ENCODE measurements at regions of chrX and their contacts with region 1.

Region 1: GRCh38 chrX:12946838-12947544 is 27.9 kb upstream of the TMSB4X start:
- DNase-seq: peak; percentile 82
- ATAC-seq: peak; percentile 89
- H3K4me3 ChIP-seq: no peak overlapping the region
- H3K27ac ChIP-seq: peak overlapping the region; percentile 53; the same call in 1 of the 2 replicates
- H3K4me1 ChIP-seq: peaks cover 14% of the 10 kb centered on the region
- H3K27me3 ChIP-seq: no peaks in the 10 kb centered on the region
- CTCF ChIP-seq: peak; percentile 100
- POLR2A ChIP-seq: no peak
- RAD21 ChIP-seq: peak; percentile 90

Region 2: DNA sequence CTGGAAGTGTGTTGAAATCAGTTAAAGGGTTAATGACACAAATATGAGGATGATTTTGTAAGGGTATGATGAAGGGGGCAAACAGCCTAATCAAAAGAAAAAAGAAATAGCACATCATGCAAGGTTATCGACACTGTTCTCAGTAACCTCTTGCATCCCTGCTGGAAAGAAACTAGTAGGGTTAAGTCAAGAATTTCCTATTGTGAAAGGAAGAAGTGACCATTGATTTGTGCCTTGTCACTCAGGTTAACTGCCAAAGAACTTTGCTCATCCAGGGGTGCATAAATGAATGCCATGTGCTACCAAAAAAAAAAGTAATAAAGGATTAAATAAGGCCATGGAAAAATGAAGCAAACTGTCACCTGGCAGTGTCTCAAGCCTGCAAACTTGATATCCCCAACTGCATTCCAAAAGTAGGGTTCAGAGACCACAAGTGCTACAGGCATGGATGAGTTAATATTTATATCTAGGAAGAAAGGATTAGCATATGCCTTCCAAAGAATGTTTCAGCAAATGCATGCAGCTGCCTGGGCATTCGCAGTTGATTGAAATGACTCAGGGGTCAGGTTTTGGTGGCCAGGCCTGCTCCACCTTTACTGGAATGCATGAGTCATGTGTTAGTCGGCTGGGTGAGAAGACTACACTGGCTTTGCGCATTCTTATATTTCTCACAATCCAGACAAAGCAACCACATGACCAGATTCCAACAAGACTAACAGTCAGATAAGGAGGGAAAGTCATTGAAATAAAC is 451.3 kb after region 1 on chrX:
- CTCF ChIA-PET with region 1: no interaction called
- POLR2A ChIA-PET with region 1: no interaction called
- dilution Hi-C with region 1: no loop called
- in situ Hi-C with region 1: no loop called
- intact Hi-C with region 1: loop called (anchors 2 kb)
- DNase-seq: peak; percentile 100
- ATAC-seq: peak; percentile 94
- H3K4me3 ChIP-seq: no peak overlapping the region
- H3K27ac ChIP-seq: peak overlapping the region; percentile 41
- H3K4me1 ChIP-seq: peaks cover 4% of the 10 kb centered on the region
- H3K27me3 ChIP-seq: no peaks in the 10 kb centered on the region
- CTCF ChIP-seq: no peak
- POLR2A ChIP-seq: no peak
- RAD21 ChIP-seq: peak; percentile 35

Region 3: DNA sequence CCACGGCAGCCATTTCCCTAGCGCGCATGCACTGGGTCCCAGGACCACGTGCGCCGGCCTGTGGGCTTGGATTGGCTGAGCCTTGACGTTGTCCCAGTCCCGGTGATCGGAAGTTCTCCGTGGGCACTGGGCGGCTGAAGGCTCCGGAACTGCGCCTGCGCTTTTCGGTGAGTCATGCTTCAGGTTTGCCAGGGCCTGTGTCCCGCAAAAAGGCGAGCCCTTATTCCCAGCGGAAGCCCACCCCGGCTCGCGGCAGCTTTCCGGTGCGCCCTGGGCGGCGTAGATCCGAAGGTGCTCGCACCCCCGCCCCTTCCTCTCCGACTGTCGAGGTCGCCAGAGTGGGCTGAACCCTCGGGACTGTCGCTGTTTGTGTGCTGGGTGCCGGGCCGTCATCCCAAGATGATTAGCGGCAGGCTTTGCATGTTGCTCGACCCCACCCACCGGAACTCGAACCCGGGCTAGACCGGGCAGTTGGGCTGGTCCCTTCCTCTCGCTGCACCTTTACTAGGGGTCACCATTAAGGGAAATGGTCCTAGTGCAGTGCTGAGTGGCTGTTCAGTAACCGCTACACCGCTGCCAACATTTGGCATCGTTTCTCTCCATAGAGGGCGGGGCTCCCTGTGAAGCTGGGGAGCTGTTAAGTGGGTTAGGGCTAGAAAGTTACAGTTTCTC is 706.2 kb after region 1 on chrX and contains the start of gene TCEANC:
- CTCF ChIA-PET with region 1: no interaction called
- POLR2A ChIA-PET with region 1: no interaction called
- dilution Hi-C with region 1: no loop called
- in situ Hi-C with region 1: loop called (anchors 10 kb)
- intact Hi-C with region 1: loop called (anchors 10 kb)
- DNase-seq: peak; percentile 98
- ATAC-seq: peak; percentile 97
- H3K4me3 ChIP-seq: peak within 1 kb of the TSS; percentile 73
- H3K27ac ChIP-seq: peak within 1 kb of the TSS; percentile 96
- H3K4me1 ChIP-seq: peaks cover 2% of the 10 kb centered on the region
- H3K27me3 ChIP-seq: no peaks in the 10 kb centered on the region; the same call in 1 of the 2 replicates
- CTCF ChIP-seq: no peak
- POLR2A ChIP-seq: peak; percentile 81
- RAD21 ChIP-seq: no peak
- total RNA-seq, gene TCEANC: 1.4 and 2.5 TPM in 2 replicates

Measured in IMR-90 (cell line).